ENCODE measurements at regions of chr17 and their contacts with region 1.

Region 1: GRCh38 chr17:7021993-7022778 is 664 bp upstream of the BCL6B start:
- DNase-seq: peak; percentile 89
- ATAC-seq: peak; percentile 77
- H3K4me3 Mint-ChIP-seq: peak overlapping the region; percentile 62
- H3K27ac Mint-ChIP-seq: peak overlapping the region; percentile 79
- H3K4me1 Mint-ChIP-seq: peaks cover 60% of the 10 kb centered on the region
- H3K27me3 Mint-ChIP-seq: no peaks in the 10 kb centered on the region

Region 2: GRCh38 chr17:6913608-6914443 is 108.4 kb before region 1 on chr17:
- CTCF ChIA-PET with region 1: interaction called, 44 read pairs
- DNase-seq: peak; percentile 88
- ATAC-seq: peak; percentile 86
- H3K4me3 Mint-ChIP-seq: peak overlapping the region; percentile 72
- H3K27ac Mint-ChIP-seq: peak overlapping the region; percentile 54
- H3K4me1 Mint-ChIP-seq: peaks cover 23% of the 10 kb centered on the region
- H3K27me3 Mint-ChIP-seq: peaks cover 16% of the 10 kb centered on the region

Region 3: GRCh38 chr17:6919158-6919557 is 103.0 kb before region 1 on chr17:
- CTCF ChIA-PET with region 1: interaction called, 44 read pairs
- DNase-seq: no peak
- ATAC-seq: no peak
- H3K4me3 Mint-ChIP-seq: no peak overlapping the region
- H3K27ac Mint-ChIP-seq: no peak overlapping the region
- H3K4me1 Mint-ChIP-seq: peaks cover 4% of the 10 kb centered on the region
- H3K27me3 Mint-ChIP-seq: peaks cover 10% of the 10 kb centered on the region

Region 4: DNA sequence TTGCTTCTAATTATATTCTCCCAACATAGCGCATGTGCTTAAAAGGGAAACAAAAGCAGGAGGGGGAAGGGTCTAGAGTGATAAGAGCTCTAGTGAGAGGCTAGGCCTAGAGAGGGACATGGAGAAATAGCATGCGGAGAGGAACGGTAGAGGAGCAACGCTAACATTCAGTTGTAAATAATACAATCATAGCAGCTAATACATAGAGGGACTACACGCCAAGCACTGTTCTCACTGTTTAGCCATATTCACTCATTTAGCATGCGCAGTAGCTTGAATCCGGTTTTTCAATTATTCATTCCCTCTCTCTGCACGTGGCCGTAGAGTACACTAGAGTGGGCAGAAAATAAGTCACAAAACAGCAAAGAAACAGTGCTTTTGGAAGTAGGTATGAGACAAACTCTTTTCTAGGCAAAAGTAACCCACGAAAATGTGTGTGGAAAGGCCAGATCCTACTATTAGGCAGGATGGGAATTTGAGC is 28.0 kb before region 1 on chr17:
- CTCF ChIA-PET with region 1: no interaction called
- DNase-seq: no peak
- ATAC-seq: no peak
- H3K4me3 Mint-ChIP-seq: no peak overlapping the region
- H3K27ac Mint-ChIP-seq: no peak overlapping the region
- H3K4me1 Mint-ChIP-seq: no peaks in the 10 kb centered on the region
- H3K27me3 Mint-ChIP-seq: no peaks in the 10 kb centered on the region

Region 5: GRCh38 chr17:7004398-7005253 is 17.6 kb before region 1 on chr17:
- CTCF ChIA-PET with region 1: interaction called, 65 read pairs
- DNase-seq: no peak
- ATAC-seq: peak; percentile 95
- H3K4me3 Mint-ChIP-seq: no peak overlapping the region
- H3K27ac Mint-ChIP-seq: peak overlapping the region; percentile 40
- H3K4me1 Mint-ChIP-seq: peaks cover 20% of the 10 kb centered on the region
- H3K27me3 Mint-ChIP-seq: no peaks in the 10 kb centered on the region

Region 6: DNA sequence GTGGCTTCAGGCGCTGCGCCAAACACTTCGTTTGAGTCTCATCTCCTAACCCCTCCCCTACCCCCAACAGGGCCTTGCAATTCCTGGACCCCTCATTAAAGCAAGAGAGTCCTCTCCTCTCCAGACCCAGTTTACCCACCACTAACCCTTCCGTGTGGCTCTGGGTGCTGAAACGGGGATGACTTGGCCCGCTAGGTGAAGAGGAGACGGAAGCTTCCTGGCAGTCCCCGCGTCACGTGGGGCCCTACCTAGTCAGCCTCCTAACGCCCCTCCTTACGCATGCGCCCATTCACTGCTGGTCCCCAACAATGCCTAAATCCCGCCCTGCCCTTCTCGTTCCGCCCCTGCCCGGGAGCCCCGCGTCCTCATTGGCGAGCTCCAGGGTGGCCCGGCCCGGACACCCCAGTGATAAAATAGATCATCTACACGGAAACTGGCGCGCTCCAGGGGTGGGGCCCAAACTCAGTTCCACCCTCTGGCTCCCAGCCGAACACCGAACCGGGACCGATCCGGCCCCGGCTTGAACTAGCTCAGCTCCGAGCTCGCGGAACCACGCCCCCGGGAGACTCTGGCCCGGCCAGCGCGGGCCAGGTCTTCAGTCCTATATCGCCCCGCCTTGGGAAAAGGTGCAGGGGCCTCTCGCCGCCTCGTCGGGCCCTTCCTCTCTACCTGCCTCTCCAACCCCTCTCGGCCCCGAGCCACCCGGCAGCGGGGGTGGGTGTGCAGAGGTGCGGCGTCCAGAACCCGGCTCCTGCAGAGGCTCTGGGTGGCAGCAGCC is 13.6 kb after region 1 on chr17 and contains the start of gene SLC16A13:
- CTCF ChIA-PET with region 1: interaction called, 20 read pairs
- DNase-seq: peak; percentile 100
- ATAC-seq: peak; percentile 95
- H3K4me3 Mint-ChIP-seq: peak within 1 kb of the TSS; percentile 88
- H3K27ac Mint-ChIP-seq: peak within 1 kb of the TSS; percentile 95
- H3K4me1 Mint-ChIP-seq: peaks cover 67% of the 10 kb centered on the region
- H3K27me3 Mint-ChIP-seq: no peaks in the 10 kb centered on the region
- total RNA-seq, gene SLC16A13: 19.0 to 34.1 TPM

Region 7: DNA sequence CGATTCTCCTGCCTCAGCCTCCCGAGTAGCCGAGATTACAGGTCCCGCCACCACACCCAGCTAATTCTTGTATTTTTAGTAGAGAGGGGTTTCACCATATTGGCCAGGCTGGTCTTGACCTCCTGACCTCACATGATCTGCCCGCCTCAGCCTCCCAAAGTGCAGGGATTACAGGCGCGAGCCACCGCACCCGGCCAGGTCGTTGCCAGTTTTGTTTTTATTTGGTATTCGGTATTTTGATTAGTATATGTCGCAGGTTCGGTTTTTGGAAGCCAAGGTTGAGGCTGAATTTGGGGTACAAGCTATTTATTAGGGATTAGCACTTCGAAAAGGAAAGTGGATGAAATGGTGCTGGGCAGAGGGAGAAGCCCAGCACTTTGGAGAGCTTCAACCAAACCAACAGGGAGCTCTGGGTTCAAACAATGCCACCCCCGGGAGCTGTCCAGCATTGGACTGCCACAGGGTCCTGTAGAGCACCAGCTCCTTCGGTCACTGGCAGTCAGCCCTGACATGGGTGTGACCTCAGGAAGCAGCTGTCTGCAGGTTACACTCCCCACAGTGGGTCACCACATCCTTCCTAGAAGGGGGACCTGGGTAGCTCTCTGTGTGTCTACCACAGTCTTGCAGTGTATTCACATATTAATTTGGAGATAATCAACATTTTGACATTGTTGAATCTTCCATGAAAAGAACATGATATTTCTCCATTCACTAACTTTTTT is 59.3 kb after region 1 on chr17:
- CTCF ChIA-PET with region 1: no interaction called
- DNase-seq: peak; percentile 90
- ATAC-seq: peak; percentile 91
- H3K4me3 Mint-ChIP-seq: no peak overlapping the region
- H3K27ac Mint-ChIP-seq: no peak overlapping the region
- H3K4me1 Mint-ChIP-seq: peaks cover 28% of the 10 kb centered on the region
- H3K27me3 Mint-ChIP-seq: peaks cover 42% of the 10 kb centered on the region

Measured in activated CD8-positive, alpha-beta memory T cell treated with anti-CD3 and anti-CD28 coated beads, Interleukin-2, amount 10 ng/mL, durations not matched to agents 7 days and 5 days (primary cell).